ENCODE measurements at regions of chr14 and their contacts with region 1.

Region 1: DNA sequence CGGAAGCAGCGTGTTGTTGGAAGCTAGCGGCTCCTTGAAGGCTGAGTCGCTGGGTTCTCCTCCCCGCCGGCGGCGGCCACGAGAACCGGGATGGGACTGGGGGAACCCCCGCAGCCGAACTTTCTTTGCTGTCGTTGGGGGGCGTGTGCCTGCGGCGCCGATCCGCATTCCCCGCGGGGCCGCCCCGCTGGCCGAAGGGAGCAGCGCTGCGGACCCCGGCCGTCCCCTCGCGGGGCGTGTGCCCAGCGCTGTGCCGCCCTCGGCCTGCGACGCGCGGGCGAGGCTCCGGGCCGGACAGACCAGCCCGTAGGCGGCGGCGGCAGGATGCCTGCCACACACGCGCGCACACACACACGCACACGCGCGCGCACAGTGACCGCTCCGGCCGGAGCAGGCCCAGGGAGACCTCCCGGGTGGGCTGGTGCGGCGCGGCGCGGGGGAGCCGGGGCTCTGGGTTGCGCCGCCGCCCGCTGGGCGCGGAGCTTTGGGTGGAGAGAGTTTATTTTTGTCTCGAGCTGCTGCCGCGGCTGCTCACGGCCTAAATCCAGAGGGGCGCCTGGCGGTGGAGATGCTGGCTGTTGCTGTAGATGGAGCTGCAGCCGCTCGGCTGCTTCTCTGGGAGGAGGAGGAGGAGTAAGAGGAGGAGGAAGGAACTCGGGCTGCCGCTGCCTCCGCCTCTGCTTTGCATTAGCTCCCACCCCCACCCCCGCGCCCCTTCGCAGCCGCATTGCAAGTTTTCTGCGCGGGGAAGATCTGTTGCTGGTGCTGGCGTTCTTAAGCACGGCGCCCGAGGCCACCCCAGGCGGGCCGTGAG is at the start of gene SAMD4A:
- DNase-seq: peak; percentile 75
- ATAC-seq: peak; percentile 20
- H3K4me3 Mint-ChIP-seq: peak within 1 kb of the TSS; percentile 85
- H3K27ac Mint-ChIP-seq: peak within 1 kb of the TSS; percentile 89
- H3K4me1 Mint-ChIP-seq: peaks cover 25% of the 10 kb centered on the region
- H3K27me3 Mint-ChIP-seq: peaks cover 15% of the 10 kb centered on the region
- total RNA-seq, gene SAMD4A: 2.7 to 2.8 TPM

Region 2: GRCh38 chr14:54440873-54441868 is 125.4 kb before region 1 on chr14 and contains the start of gene CNIH1:
- CTCF ChIA-PET with region 1: no interaction called
- POLR2A ChIA-PET with region 1: no interaction called
- intact Hi-C with region 1: loop called (anchors 2 to 5 kb)
- DNase-seq: peak; percentile 96
- ATAC-seq: peak; percentile 92
- H3K4me3 Mint-ChIP-seq: peak within 1 kb of the TSS; percentile 80
- H3K27ac Mint-ChIP-seq: peak within 1 kb of the TSS; percentile 99
- H3K4me1 Mint-ChIP-seq: peaks cover 47% of the 10 kb centered on the region
- H3K27me3 Mint-ChIP-seq: no peaks in the 10 kb centered on the region
- total RNA-seq, gene CNIH1: 86.6 to 109 TPM

Region 3: DNA sequence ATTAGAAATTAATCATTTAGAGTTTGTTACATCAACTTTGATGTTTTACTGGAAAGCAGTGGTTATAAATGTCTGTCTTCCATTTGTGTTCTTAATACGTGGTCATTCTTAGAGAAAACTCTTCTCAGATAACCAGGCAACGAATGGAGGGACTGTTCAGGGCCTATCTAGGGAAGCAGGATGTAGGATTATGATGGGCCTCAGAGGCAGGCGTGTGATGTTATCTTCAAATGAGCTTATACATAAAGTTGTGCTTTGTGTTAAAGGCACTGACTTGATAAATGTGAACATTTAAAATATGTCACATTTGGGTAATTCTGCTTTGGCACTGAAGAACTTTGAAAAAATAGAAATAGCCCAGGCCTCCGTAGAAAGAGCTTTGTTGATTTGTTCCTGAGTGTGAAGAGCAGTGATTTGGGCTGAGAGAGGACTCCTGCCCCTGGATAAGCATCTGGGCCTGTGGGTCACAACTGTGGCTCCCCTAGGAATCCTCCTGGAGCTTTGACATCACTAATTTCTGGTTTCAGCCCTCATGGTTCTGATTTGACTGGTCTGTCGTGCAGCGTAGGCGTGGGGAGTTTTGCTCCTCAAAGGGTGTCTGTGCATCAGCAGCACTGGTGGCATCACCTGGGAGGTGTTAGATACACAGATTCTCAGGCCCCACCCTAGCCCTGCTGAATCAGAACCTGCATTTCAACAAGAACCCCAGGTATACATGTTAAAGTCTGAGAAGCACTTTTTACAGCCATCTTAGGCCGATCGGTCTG is 55.8 kb after region 1 on chr14:
- CTCF ChIA-PET with region 1: interaction called, 12 read pairs
- POLR2A ChIA-PET with region 1: no interaction called
- intact Hi-C with region 1: loop called (anchors 2 to 5 kb)
- DNase-seq: peak; percentile 87
- ATAC-seq: peak; percentile 96
- H3K4me3 Mint-ChIP-seq: no peak overlapping the region
- H3K27ac Mint-ChIP-seq: no peak overlapping the region
- H3K4me1 Mint-ChIP-seq: peaks cover 30% of the 10 kb centered on the region
- H3K27me3 Mint-ChIP-seq: no peaks in the 10 kb centered on the region

Region 4: DNA sequence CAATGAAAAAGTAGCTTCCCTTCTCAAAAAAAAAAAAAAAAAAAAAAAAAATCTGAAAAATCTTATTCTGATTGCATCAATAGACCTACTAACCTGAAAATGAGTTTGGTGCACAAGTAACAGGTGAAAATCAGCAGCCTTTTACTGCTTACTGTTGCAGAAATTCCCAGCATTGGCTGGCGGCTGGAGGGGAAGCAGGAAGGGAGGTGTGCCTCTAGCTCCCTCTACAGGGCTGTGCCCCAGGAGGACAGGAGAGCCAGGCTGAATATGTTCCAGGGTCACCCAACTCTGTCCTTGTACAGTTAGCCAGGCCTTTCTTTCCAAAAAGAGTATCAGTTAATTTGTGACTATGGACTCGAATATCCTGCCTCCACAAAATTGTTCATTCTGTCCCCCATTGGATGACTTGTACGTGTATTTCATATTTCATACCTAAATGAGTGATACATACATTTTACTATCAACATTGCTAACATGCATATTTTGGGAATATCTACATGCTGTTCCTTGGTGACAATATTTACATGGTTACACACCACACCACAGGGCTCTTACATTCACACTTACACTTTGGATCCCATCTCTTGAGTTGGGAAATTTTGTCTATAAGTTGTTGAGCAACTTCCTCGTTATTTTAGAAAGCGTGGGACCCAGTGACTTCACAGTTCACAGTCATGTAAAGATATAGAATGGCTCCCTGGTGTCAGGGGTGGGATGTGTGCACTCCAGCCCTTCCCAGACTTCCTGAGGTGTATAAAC is 125.1 kb after region 1 on chr14:
- CTCF ChIA-PET with region 1: interaction called, 15 read pairs
- POLR2A ChIA-PET with region 1: no interaction called
- intact Hi-C with region 1: loop called (anchors 1 kb)
- DNase-seq: peak; percentile 76
- ATAC-seq: peak; percentile 78
- H3K4me3 Mint-ChIP-seq: no peak overlapping the region
- H3K27ac Mint-ChIP-seq: no peak overlapping the region
- H3K4me1 Mint-ChIP-seq: peaks cover 12% of the 10 kb centered on the region
- H3K27me3 Mint-ChIP-seq: peaks cover 26% of the 10 kb centered on the region

Region 5: DNA sequence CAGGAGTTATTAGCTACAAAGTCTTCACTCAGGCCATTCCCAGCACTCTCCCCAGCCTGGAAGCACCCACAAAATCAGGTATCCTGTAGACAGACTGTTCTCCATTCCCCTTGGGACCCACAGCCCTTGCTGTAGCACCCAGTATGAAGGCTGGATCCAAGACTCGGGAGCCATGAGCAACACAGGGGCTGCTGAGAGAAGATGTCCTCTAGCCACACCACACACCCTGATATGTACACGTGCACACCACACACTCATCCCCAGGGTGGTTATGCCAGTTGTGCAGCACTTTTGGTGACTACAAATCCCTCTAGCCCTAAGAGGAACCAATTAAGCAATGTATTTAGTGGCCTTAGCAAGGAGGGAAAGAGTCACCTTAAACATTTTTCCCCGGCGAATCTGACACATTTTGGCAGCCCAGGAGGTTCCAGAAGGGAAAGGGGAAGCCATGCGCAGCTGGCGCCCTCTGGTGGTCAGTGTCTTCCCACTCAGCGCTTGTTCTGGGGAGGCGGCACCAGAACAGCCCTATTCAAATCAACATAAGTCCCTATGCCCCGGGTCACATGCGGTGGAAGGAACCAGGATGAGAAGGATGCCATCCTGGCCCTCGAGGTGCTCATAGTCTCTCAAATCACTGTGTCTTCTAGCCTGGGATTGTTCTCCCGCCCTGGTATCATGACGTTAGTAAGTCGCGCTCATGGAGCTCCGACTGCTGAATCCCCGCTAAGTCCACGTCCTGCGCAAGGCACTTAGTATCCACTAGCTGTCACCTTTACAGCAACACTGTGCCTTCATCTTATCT is 239.1 kb after region 1 on chr14:
- CTCF ChIA-PET with region 1: interaction called, 42 read pairs
- POLR2A ChIA-PET with region 1: no interaction called
- intact Hi-C with region 1: loop called (anchors 1 kb)
- DNase-seq: peak; percentile 91
- ATAC-seq: peak; percentile 87
- H3K4me3 Mint-ChIP-seq: no peak overlapping the region
- H3K27ac Mint-ChIP-seq: no peak overlapping the region
- H3K4me1 Mint-ChIP-seq: peaks cover 11% of the 10 kb centered on the region
- H3K27me3 Mint-ChIP-seq: peaks cover 18% of the 10 kb centered on the region

Region 6: DNA sequence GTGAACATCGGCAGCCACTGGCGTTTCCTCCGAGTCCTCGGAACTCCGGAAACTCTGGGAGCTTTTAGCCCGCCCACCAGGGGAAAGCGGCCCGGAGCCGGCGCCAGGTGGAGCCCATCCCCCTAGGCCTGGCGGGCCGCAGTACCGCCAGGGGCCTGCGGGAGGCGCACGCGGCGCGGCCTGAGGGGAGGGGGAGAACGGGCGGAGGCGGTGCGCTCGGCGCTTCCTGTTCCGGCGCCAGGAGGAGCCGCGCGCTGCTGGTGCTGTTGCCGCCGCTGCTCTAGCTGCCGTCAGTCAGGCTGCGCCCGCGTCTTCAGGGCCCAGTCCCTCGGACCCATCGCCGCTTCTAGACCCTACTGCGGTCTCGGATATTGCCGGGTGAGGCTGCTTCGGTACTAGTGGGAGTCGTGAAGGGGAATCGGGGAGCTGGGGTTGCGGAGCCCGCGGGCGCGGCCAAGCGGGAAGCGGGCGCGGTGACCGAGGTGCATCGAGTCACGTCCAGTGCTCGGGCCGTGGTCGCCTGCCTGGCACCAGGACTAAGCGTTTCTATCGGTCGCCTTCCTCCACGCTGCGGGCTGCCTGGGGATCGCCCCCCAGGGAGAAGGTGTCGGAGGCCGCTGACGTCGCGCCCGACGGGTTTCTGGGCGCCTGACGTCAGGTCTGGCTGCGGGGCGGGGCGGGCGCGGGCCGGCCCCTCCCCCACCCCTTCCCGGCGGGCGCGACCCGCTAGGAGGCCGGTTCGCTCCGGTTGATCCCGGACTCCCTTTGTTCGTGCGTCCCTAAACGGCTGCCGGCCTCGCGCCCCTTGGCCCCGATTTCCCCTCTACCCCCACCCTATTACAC is 485.0 kb after region 1 on chr14 and contains the start of gene MAPK1IP1L:
- CTCF ChIA-PET with region 1: interaction called, 5 read pairs
- POLR2A ChIA-PET with region 1: no interaction called
- intact Hi-C with region 1: loop called in 1 of 2 experiments (anchors 10 kb)
- DNase-seq: peak; percentile 95
- ATAC-seq: peak; percentile 94
- H3K4me3 Mint-ChIP-seq: peak within 1 kb of the TSS; percentile 82
- H3K27ac Mint-ChIP-seq: peak within 1 kb of the TSS; percentile 96
- H3K4me1 Mint-ChIP-seq: peaks cover 33% of the 10 kb centered on the region
- H3K27me3 Mint-ChIP-seq: no peaks in the 10 kb centered on the region
- total RNA-seq, gene MAPK1IP1L: 98.6 to 180 TPM

Measured in activated CD4-positive, alpha-beta T cell treated with anti-CD3 and anti-CD28 coated beads for 36 hours (primary cell).